Activated CD4-positive, alpha-beta memory T cell treated with anti-CD3 and anti-CD28 coated beads for 36 hours (primary cell): ENCODE measurements at regions of chr19 and their contacts with region 1.

Region 1: DNA sequence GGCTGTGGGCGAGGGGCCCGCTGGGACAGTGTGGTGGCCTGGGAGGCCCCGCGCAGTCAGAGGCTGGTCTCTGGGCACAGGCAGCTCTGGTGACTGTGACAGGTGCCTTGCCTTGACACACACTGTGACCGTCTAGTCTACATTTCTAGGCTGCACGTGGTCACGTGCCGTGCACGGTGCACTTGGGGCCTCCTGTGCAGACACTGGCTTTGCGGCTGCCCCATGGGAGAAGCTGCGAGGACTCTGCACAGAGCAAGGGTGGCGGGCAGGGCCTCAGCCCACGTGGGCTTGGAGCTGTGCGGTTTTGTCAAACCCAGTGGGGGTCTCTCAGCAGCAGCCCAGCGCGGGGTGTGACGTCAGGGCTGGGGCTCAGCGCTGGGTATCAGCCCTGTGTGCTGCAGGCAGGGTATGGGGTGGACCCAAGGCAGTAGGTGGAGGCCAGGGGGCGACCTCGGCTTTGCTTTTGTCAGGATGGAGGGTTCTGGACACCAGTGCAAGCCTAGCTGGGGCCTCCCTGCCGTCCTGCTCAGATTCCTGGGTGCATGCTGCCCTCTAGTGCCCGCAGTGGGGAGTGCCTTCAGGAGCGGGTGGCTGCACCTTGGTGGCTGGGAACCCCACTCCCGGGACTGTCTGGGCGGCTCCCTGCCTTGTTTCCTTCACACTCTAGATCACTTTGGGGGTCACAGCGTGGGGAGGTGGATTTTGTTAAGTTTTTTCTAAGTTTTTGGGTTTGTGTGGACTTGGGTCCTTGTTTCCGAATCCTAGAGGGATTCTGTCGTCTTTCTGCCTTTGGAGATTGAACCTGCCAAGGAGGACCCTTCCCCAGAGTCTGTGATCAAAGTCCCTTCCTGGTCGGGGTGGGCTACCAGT is 62.6 kb downstream of the KDM4B start:
- DNase-seq: peak; percentile 88
- H3K4me3 Mint-ChIP-seq: no peak overlapping the region
- H3K27ac Mint-ChIP-seq: no peak overlapping the region
- H3K4me1 Mint-ChIP-seq: no peaks in the 10 kb centered on the region
- H3K27me3 Mint-ChIP-seq: no peaks in the 10 kb centered on the region

Region 2: GRCh38 chr19:4968462-4969291 is 62.8 kb before region 1 on chr19 and contains the start of gene KDM4B:
- CTCF ChIA-PET with region 1: interaction called, 21 read pairs
- POLR2A ChIA-PET with region 1: no interaction called
- intact Hi-C with region 1: no loop called
- DNase-seq: peak; percentile 99
- H3K4me3 Mint-ChIP-seq: peak within 1 kb of the TSS; percentile 89
- H3K27ac Mint-ChIP-seq: peak within 1 kb of the TSS; percentile 79
- H3K4me1 Mint-ChIP-seq: peaks cover 31% of the 10 kb centered on the region
- H3K27me3 Mint-ChIP-seq: no peaks in the 10 kb centered on the region
- total RNA-seq, gene KDM4B: 19.2 to 20.6 TPM

Region 3: GRCh38 chr19:5001615-5002014 is 29.9 kb before region 1 on chr19:
- CTCF ChIA-PET with region 1: interaction called, 59 read pairs
- POLR2A ChIA-PET with region 1: no interaction called
- intact Hi-C with region 1: loop called (anchors 1 kb)
- DNase-seq: peak; percentile 48
- H3K4me3 Mint-ChIP-seq: no peak overlapping the region
- H3K27ac Mint-ChIP-seq: no peak overlapping the region
- H3K4me1 Mint-ChIP-seq: peaks cover 3% of the 10 kb centered on the region
- H3K27me3 Mint-ChIP-seq: no peaks in the 10 kb centered on the region